Activated T-helper 2 cell treated with anti-CD3 and anti-CD28 coated beads, Interferon-gamma antibody, Interleukin-2, Interleukin-4, amounts not matched to agents 10 μg/mL and 5 μg/mL and 100 μg/mL, durations not matched to agents 14 hours and 24 hours and 36 hours (primary cell): ENCODE measurements at regions of chr6 and their contacts with region 1.

Region 1: DNA sequence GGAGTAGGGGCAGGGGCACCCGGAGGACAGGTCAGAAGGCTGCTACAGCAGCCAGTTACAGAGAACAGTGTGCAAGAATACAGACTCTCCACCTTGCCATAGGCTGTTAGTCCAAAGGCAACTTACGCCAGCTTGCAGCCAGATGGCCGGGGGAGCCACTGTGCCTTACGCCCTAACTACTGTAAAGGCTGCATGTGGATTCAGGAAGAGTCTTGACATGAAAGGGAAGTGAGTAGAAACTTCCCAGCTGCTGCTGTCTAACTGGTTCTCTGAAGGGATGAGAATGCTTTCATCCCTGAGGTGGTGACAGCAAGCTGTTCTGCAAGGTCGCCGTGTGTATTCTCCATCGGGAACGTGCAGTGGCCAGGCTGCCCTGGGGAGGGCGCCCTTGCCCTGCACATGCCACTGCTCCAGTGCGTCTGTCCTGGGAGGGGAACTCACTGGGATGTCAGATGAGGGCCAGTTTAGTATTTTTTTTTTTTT is 46.1 kb downstream of the LYRM4 start:
- DNase-seq: no peak
- H3K4me3 Mint-ChIP-seq: no peak overlapping the region
- H3K27ac Mint-ChIP-seq: no peak overlapping the region
- H3K4me1 Mint-ChIP-seq: peaks cover 14% of the 10 kb centered on the region
- H3K27me3 Mint-ChIP-seq: no peaks in the 10 kb centered on the region

Region 2: GRCh38 chr6:5246141-5247097 is 31.8 kb after region 1 on chr6:
- intact Hi-C with region 1: no loop called
- DNase-seq: no peak
- H3K4me3 Mint-ChIP-seq: no peak overlapping the region
- H3K27ac Mint-ChIP-seq: no peak overlapping the region
- H3K4me1 Mint-ChIP-seq: peaks cover 2% of the 10 kb centered on the region
- H3K27me3 Mint-ChIP-seq: no peaks in the 10 kb centered on the region

Region 3: GRCh38 chr6:5343998-5344397 is 129.4 kb after region 1 on chr6:
- intact Hi-C with region 1: no loop called
- DNase-seq: no peak
- H3K4me3 Mint-ChIP-seq: no peak overlapping the region
- H3K27ac Mint-ChIP-seq: no peak overlapping the region
- H3K4me1 Mint-ChIP-seq: peaks cover 11% of the 10 kb centered on the region
- H3K27me3 Mint-ChIP-seq: no peaks in the 10 kb centered on the region

Region 4: GRCh38 chr6:5379647-5380242 is 165.1 kb after region 1 on chr6:
- intact Hi-C with region 1: loop called (anchors 1 kb)
- DNase-seq: no peak
- H3K4me3 Mint-ChIP-seq: no peak overlapping the region
- H3K27ac Mint-ChIP-seq: no peak overlapping the region
- H3K4me1 Mint-ChIP-seq: no peaks in the 10 kb centered on the region
- H3K27me3 Mint-ChIP-seq: no peaks in the 10 kb centered on the region

Region 5: GRCh38 chr6:5398530-5398929 is 183.9 kb after region 1 on chr6:
- intact Hi-C with region 1: loop called (anchors 2 kb)
- DNase-seq: no peak
- H3K4me3 Mint-ChIP-seq: no peak overlapping the region
- H3K27ac Mint-ChIP-seq: no peak overlapping the region
- H3K4me1 Mint-ChIP-seq: peaks cover 9% of the 10 kb centered on the region
- H3K27me3 Mint-ChIP-seq: no peaks in the 10 kb centered on the region